CD4-positive, alpha-beta T cell (primary cell): ENCODE measurements at regions of chr3 and their contacts with region 1.

Region 1: DNA sequence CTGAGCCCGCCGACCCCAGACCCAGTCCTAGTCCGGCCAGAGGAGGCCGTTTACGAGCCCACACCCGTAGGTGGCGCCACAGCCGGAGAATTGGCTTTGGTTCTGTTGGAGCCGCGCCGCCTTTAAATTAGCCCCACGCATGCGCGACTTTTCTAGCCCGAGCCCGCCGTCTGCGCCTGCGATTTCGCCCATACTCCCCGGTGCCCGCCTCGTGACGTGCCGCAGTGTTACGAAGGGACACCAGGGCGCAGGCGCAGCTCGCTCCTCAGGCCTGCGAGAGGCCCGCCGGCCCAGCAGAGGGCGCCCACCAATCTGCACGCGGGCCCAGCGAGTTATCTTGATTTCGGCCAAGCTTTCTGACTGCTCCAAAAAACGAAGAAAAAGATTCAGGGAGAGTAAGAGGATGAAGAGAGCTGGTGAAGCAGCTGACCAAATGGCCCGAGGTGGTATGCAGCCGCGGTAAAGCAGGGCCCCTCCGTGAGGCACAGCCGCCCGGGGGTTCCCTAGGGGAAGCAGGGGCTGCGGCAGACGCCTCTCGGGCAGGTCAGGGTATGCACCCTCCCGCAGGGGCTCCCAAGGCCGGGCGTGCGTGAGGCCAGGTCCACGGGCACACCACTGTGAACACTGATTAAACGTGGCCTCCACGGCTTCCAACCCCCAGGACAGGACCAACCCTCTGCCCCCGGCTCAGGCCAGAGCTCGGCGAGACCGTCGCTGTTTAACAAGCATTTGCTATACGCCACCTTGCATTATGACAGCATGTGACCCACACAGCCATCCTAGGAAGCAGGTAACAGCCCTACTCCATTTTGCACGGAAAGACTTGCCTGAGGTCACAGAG is 32.8 kb downstream of the RPN1 start:
- DNase-seq: peak; percentile 94 to 100 (median 99)
- ATAC-seq: peak; percentile 92
- H3K4me3 ChIP-seq: peak overlapping the region; percentile 99
- H3K4me3 Mint-ChIP-seq: peak overlapping the region; percentile 98
- H3K27ac ChIP-seq: peak overlapping the region; percentile 89 to 91
- H3K27ac Mint-ChIP-seq: peak overlapping the region; percentile 96
- H3K4me1 ChIP-seq: peaks cover 28% of the 10 kb centered on the region
- H3K4me1 Mint-ChIP-seq: peaks cover 29% of the 10 kb centered on the region
- H3K27me3 ChIP-seq: no peaks in the 10 kb centered on the region
- H3K27me3 Mint-ChIP-seq: no peaks in the 10 kb centered on the region
- CTCF ChIP-seq: peak; percentile 96

Region 2: DNA sequence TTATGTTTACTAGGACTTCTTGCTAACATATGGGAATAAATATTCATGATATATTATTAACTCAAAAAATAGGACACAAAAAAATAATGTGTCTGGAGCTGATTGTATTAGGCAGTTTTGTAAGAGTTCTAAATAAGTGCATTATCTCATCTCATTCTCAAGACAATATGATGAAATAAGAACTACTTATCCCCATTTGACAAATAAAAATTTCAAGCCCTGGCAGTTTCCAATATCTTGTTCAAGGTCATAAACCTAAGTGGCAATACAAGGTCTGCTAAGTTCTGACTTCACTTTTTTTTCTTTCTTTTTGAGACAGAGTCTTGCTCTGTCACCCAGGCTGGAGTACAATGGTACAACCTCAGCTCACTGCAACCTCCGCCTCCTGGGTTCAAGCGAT is 14.5 kb after region 1 on chr3:
- CTCF ChIA-PET with region 1: interaction called, 13 read pairs
- POLR2A ChIA-PET with region 1: no interaction called
- intact Hi-C with region 1: no loop called
- DNase-seq: no peak
- ATAC-seq: no peak
- H3K4me3 ChIP-seq: no peak overlapping the region
- H3K4me3 Mint-ChIP-seq: no peak overlapping the region
- H3K27ac ChIP-seq: no peak overlapping the region
- H3K27ac Mint-ChIP-seq: no peak overlapping the region
- H3K4me1 ChIP-seq: no peaks in the 10 kb centered on the region
- H3K4me1 Mint-ChIP-seq: peaks cover 14% of the 10 kb centered on the region
- H3K27me3 ChIP-seq: no peaks in the 10 kb centered on the region
- H3K27me3 Mint-ChIP-seq: no peaks in the 10 kb centered on the region
- CTCF ChIP-seq: no peak

Region 3: DNA sequence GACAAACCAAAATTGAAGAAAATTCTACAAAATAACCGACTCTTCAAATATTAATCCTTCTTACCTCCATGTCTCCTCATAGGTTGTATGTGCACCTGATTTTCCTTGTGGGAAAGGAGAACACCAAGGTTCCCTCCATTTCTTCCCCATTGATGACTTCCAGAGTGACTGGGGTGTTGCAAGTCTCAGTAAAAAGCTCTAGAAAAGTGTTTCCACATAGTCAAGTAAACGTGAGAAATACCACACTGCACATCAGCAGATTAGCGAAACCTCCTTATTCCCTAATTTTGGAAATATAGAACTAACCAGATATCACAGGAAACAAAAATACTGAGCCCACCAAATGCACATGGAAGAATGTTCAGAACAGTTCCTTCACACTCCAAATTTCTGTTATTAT is 37.8 kb after region 1 on chr3:
- CTCF ChIA-PET with region 1: interaction called, 18 read pairs
- POLR2A ChIA-PET with region 1: interaction called, 13 read pairs
- intact Hi-C with region 1: loop called (anchors 1 kb)
- DNase-seq: no peak
- ATAC-seq: no peak
- H3K4me3 ChIP-seq: no peak overlapping the region
- H3K4me3 Mint-ChIP-seq: peak overlapping the region; percentile 87
- H3K27ac ChIP-seq: no peak overlapping the region
- H3K27ac Mint-ChIP-seq: no peak overlapping the region
- H3K4me1 ChIP-seq: peaks cover 16% of the 10 kb centered on the region
- H3K4me1 Mint-ChIP-seq: peaks cover 20% of the 10 kb centered on the region
- H3K27me3 ChIP-seq: no peaks in the 10 kb centered on the region
- H3K27me3 Mint-ChIP-seq: no peaks in the 10 kb centered on the region
- CTCF ChIP-seq: no peak

Region 4: GRCh38 chr3:128787256-128788240 is 169.8 kb after region 1 on chr3:
- CTCF ChIA-PET with region 1: interaction called, 4 read pairs
- POLR2A ChIA-PET with region 1: interaction called, 6 read pairs
- intact Hi-C with region 1: loop called in 1 of 2 experiments (anchors 5 kb)
- DNase-seq: peak in 8 of 14 experiments; percentile 8 to 79 (median 40)
- ATAC-seq: peak; percentile 54
- H3K4me3 ChIP-seq: no peak overlapping the region
- H3K4me3 Mint-ChIP-seq: peak overlapping the region; percentile 80
- H3K27ac ChIP-seq: peak overlapping the region; percentile 60 to 64
- H3K27ac Mint-ChIP-seq: peak overlapping the region; percentile 89
- H3K4me1 ChIP-seq: peaks cover 63% of the 10 kb centered on the region
- H3K4me1 Mint-ChIP-seq: peaks cover 94% of the 10 kb centered on the region
- H3K27me3 ChIP-seq: no peaks in the 10 kb centered on the region
- H3K27me3 Mint-ChIP-seq: no peaks in the 10 kb centered on the region
- CTCF ChIP-seq: peak; percentile 24

Region 5: GRCh38 chr3:128845778-128846485 is 228.2 kb after region 1 on chr3:
- CTCF ChIA-PET with region 1: interaction called, 12 read pairs
- POLR2A ChIA-PET with region 1: interaction called, 7 read pairs
- intact Hi-C with region 1: loop called (anchors 1 kb)
- DNase-seq: peak; percentile 62 to 88 (median 76)
- ATAC-seq: peak; percentile 81
- H3K4me3 ChIP-seq: peak overlapping the region; percentile 58
- H3K4me3 Mint-ChIP-seq: peak overlapping the region; percentile 72
- H3K27ac ChIP-seq: peak overlapping the region; percentile 7 to 18
- H3K27ac Mint-ChIP-seq: peak overlapping the region; percentile 55
- H3K4me1 ChIP-seq: peaks cover 21% of the 10 kb centered on the region
- H3K4me1 Mint-ChIP-seq: peaks cover 14% of the 10 kb centered on the region
- H3K27me3 ChIP-seq: no peaks in the 10 kb centered on the region
- H3K27me3 Mint-ChIP-seq: no peaks in the 10 kb centered on the region
- CTCF ChIP-seq: peak; percentile 90